Left cardiac atrium (tissue), 4 donors: ENCODE measurements at regions of chr11 and their contacts with region 1.

Region 1: DNA sequence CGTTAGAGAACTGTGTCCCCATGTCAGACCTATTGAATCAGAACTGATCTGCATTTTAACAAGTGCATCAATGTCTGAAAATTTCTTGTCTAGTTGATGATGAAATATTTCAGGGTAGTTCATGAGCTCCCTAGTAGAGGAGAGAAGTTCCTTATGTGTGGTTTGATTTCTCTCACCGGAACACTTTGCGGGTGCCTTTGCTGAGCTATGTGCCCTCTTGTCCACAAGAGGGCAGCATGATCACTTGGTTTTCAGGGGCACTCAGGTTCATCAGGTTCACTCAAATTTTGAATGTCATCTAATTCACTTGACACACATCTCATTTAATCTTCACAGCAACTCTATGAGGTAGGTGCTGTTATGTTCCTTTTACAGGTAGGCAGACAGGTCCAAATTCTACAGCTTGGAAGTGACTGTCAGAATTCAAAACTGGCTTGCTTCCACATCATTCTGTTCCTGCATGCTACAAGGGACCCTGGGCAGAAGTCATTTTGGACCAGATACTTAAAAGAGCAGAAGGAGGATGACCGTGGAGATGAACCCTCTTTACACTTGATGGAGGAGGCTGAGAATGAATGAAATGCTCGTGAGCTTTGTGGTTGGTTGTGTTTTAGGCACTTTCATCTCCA is 55.6 kb downstream of the P4HA3 start:
- DNase-seq: peak; percentile 33
- ATAC-seq: peak; percentile 58 to 65

Region 2: DNA sequence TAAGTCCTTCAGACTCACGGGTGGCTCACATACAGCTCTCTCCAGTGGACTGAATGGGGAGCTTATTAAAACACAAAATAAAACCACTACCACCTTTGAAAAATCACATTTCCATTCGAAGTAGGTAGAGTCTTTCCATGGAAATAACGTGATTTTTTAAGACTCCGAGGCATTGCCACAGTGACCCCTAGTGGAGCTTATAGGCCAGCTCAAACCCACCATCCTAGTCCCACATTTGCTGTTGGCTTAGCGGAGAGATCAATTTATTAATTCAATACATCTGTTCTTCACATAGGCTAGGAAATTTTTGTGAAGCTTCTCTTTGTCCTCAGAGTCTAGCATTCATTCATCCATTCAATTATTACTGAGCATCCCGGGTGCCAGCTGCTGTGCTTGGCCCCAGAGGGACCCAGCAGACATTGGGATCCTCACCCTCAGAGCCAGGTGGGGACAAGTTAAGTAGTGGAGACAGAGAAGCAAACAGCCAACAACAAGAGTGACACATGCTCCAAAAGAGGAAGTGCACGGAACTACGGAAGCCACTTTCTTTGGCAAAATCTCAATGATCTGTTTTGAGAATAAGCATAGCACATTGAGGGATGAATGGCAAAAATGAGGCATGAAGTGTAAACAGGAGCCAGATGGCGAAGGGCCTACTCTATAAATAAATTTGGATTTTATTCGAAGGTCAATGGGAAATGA is 65.8 kb after region 1 on chr11:
- intact Hi-C with region 1: loop called (anchors 5 to 10 kb)
- DNase-seq: no peak
- ATAC-seq: peak in 1 of 2 donors; percentile 42

Region 3: GRCh38 chr11:74570266-74571061 is 314.6 kb after region 1 on chr11:
- intact Hi-C with region 1: loop called in 1 of 2 experiments (anchors 5 kb)
- DNase-seq: peak; percentile 40
- ATAC-seq: peak; percentile 68 to 76

Region 4: GRCh38 chr11:74683279-74683871 is 427.5 kb after region 1 on chr11:
- intact Hi-C with region 1: no loop called
- DNase-seq: peak; percentile 47
- ATAC-seq: peak; percentile 45 to 64